Activated naive CD4-positive, alpha-beta T cell treated with anti-CD3 and anti-CD28 coated beads for 36 hours (primary cell): ENCODE measurements at regions of chr3 and their contacts with region 1.

Region 1: DNA sequence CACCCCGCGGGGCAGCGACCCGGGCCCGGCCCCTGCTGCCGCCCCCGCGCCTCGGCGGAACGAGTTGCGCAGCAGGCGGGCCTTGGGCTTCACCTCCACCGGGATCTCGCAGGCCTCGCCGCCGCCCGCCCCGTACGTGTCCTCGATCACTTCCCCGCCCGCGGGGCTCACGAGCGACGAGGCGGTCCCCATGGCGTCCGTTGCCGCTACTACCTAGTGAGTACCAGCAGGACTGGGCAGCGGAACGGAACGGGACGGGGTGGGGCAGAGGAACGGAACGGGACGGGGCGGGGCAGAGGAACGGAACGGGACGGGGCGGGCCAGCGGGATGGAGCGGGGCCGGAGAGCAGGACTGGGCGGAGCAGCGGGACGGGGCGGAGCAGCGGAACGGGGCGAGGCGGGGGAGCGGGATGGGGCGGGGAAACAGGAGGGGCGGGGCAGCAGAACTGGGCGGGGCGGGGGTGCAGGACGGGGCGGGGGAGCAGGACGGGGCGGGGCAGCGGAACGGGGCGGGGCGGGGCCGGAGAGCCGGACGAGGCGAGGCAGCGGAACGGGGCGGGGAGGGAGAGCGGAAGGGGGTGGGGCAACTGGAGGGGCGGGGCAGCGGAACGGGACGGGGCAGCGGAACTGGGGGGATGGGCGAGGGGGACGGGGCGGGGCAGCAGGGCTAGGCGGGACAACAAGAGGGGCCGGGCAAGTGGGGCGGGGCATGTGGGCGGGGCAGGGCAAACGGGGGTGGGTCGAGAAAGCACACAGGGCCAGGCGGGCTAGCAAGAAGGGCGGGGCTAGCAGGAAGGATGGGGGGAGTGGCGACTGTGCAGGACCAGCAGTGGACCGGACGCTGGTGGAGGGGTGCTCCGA is at the start of gene NPHP3:
- DNase-seq: peak; percentile 98
- H3K4me3 Mint-ChIP-seq: peak within 1 kb of the TSS; percentile 86
- H3K27ac Mint-ChIP-seq: peak within 1 kb of the TSS; percentile 73
- H3K4me1 Mint-ChIP-seq: peaks cover 34% of the 10 kb centered on the region
- H3K27me3 Mint-ChIP-seq: no peaks in the 10 kb centered on the region
- total RNA-seq, gene NPHP3: 11.4 to 11.6 TPM

Region 2: GRCh38 chr3:132268956-132269355 is 453.4 kb before region 1 on chr3:
- CTCF ChIA-PET with region 1: no interaction called
- intact Hi-C with region 1: no loop called
- DNase-seq: no peak
- H3K4me3 Mint-ChIP-seq: no peak overlapping the region
- H3K27ac Mint-ChIP-seq: no peak overlapping the region
- H3K4me1 Mint-ChIP-seq: no peaks in the 10 kb centered on the region
- H3K27me3 Mint-ChIP-seq: peaks cover 3% of the 10 kb centered on the region

Region 3: DNA sequence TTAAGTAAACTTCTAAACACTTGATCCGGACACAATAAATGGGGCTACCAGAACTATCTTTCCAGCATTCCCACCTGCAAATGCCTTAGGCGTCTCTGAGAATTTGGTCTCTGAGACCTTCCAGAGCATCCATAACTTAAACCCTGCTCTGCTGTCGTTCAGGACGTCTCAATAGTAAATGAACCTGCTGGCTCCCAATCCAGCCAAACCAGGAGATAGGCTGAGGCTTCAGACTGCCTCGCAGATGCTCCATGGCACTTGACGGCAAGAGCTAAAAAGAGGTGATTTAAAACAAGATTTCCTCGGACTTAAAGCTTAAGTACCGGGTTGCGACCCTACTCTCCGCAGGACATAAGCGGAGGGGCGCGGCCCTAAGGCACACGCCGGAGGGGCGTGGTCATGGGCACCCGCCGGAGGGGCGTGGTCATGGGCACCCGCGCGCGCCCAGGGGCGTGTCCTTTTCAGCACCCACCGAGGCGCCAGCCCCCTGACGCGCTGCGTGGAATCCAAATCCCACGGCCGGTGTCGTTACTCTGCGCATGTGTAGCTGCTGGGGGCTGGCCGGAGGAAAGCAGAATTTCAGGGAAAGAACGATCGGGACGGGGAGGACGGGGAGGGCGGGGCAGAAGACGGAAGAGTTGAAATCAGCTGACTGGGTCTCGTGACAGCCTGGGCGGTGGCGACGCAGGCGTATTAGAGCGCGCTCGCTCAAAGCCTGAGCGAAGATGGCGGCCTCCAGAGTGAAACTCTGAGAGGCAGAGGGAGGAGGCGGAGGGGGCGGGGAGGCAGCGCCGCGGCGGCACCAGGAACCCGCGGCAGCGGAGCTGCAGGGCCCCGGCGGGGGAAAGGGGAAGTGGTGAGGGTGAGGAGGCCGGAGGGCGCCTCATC is 305.3 kb before region 1 on chr3 and contains the start of gene DNAJC13:
- CTCF ChIA-PET with region 1: no interaction called
- intact Hi-C with region 1: loop called (anchors 1 kb)
- DNase-seq: peak; percentile 92
- H3K4me3 Mint-ChIP-seq: peak within 1 kb of the TSS; percentile 91
- H3K27ac Mint-ChIP-seq: peak within 1 kb of the TSS; percentile 90
- H3K4me1 Mint-ChIP-seq: peaks cover 22% of the 10 kb centered on the region
- H3K27me3 Mint-ChIP-seq: no peaks in the 10 kb centered on the region
- total RNA-seq, gene DNAJC13: 32.8 to 33.6 TPM

Region 4: GRCh38 chr3:132800958-132801357 is 78.6 kb after region 1 on chr3:
- CTCF ChIA-PET with region 1: no interaction called
- intact Hi-C with region 1: no loop called
- DNase-seq: no peak
- H3K4me3 Mint-ChIP-seq: no peak overlapping the region
- H3K27ac Mint-ChIP-seq: no peak overlapping the region
- H3K4me1 Mint-ChIP-seq: no peaks in the 10 kb centered on the region
- H3K27me3 Mint-ChIP-seq: peaks cover 4% of the 10 kb centered on the region

Region 5: DNA sequence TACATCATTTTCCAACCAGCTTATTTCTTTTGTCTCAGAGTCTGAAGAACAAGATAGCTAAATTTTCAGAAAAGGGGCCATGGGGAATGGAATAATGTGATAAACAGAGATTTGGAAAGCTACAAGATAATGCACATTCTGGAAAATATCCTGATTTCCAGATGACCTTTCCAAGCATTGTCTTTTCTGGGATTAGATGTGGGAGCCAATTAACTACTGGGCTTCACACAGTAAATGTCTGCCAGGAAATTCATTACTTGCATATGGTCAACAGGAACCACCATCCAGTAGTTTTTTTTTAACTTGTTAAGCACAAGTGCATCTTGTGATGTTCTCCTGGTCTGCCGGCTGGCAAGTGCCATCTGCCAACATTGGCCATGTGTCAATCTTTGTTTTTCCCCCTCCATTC is 546.3 kb after region 1 on chr3:
- CTCF ChIA-PET with region 1: no interaction called
- intact Hi-C with region 1: loop called (anchors 10 kb)
- DNase-seq: no peak
- H3K4me3 Mint-ChIP-seq: no peak overlapping the region
- H3K27ac Mint-ChIP-seq: no peak overlapping the region
- H3K4me1 Mint-ChIP-seq: peaks cover 6% of the 10 kb centered on the region
- H3K27me3 Mint-ChIP-seq: peaks cover 21% of the 10 kb centered on the region

Region 6: DNA sequence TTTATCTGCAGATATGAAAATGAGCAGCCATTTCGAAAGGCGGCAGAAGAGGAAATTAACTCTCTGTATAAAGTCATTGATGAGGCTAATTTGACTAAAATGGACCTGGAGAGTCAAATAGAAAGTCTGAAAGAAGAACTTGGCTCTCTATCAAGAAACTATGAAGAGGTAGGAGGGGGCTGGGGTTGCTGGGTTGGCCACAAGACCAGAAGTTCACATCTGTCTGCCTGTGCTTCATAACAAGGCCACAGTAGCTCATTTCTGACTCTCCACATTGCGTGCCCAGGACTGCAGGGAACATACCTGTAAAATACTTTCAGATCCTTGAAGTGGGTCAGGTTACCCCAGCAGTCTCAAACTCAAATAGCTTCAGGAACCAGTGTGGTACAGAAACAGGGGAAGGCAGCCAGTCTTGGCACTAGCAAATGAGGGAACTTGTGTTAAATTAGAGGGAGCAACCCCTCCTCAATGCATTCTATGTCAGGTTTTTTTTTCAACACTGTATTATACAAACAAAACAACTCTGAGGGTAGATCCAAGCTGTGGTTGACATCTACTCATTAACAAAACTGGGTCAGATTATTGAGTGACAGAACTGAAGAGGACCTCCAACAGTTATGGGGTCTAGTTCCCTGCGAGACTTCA is 726.2 kb after region 1 on chr3:
- CTCF ChIA-PET with region 1: no interaction called
- intact Hi-C with region 1: loop called (anchors 2 kb)
- DNase-seq: peak; percentile 76
- H3K4me3 Mint-ChIP-seq: no peak overlapping the region
- H3K27ac Mint-ChIP-seq: peak overlapping the region; percentile 42
- H3K4me1 Mint-ChIP-seq: peaks cover 36% of the 10 kb centered on the region
- H3K27me3 Mint-ChIP-seq: no peaks in the 10 kb centered on the region

Region 7: DNA sequence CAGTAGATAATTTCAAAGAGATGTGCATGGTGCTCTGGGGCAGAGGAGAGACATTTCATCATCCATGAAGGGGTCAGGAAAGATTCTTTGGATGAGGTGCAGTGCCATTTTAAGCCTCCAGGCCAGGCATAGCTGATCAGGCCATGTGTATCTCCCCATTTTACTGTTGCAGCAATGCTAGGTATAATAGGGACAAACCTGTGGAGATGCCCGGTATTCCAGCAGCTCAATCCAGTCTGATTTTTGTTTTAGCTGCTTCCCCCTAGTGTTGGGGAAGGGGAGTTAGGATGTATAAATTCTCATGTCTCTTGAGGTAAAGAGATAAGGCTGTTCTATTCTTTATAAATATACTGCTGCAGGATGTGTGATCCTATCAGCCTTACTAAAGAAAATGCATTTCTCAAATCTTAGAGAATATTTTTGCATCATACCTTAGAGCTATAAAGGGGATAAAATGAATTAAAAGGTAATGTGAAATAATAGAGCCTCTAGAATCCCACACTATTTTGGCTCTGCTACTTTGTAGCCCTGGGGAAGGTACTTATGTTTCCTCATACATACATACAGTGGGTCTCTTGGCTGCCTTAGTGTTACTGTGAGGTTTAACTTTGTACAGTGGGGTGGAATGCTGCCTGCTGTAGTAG is 856.3 kb after region 1 on chr3:
- CTCF ChIA-PET with region 1: interaction called, 3 read pairs
- intact Hi-C with region 1: loop called (anchors 1 kb)
- DNase-seq: no peak
- H3K4me3 Mint-ChIP-seq: peak overlapping the region; percentile 86
- H3K27ac Mint-ChIP-seq: peak overlapping the region; percentile 79
- H3K4me1 Mint-ChIP-seq: peaks cover 56% of the 10 kb centered on the region
- H3K27me3 Mint-ChIP-seq: no peaks in the 10 kb centered on the region

Region 8: DNA sequence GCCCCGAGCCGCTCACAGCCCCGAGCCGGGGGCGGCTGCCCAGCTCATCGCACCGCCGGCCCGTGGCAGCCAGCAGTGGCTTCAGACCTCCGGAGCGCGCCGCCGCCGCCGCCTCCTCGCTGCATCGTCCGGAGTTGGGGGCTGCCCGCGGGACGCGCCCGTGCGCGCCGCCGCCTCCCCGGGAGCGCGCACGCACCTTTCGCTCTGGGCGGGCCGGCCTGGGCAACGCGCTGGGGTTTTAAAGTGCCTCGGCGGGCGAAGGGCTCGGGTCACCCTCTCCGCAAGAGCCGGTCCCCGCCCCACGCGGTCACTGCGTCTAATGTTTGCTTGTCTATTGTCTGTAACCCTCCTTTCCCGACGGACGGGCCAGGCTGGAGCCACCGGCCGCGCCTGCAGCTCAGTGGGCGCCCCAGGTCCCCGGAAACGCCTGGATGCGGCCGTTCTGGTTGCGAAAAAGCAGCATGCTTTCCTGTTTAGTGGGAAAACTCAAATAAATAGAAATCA is 1528.4 kb after region 1 on chr3 and contains the start of gene RYK:
- CTCF ChIA-PET with region 1: no interaction called
- intact Hi-C with region 1: loop called (anchors 5 kb)
- DNase-seq: peak; percentile 70
- H3K4me3 Mint-ChIP-seq: peak within 1 kb of the TSS; percentile 95
- H3K27ac Mint-ChIP-seq: peak within 1 kb of the TSS; percentile 90
- H3K4me1 Mint-ChIP-seq: peaks cover 57% of the 10 kb centered on the region
- H3K27me3 Mint-ChIP-seq: no peaks in the 10 kb centered on the region
- total RNA-seq, gene RYK: 19.5 to 19.7 TPM